Endothelial cell of umbilical vein (primary cell): ENCODE measurements at regions of chr20 and their contacts with region 1.

Region 1: GRCh38 chr20:49729721-49730138 is 16.1 kb upstream of the B4GALT5 start:
- DNase-seq: no peak
- H3K4me3 ChIP-seq: no peak overlapping the region
- H3K27ac ChIP-seq: no peak overlapping the region
- H3K4me1 ChIP-seq: peaks cover 6% of the 10 kb centered on the region
- H3K27me3 ChIP-seq: no peaks in the 10 kb centered on the region
- CTCF ChIP-seq: no peak
- POLR2A ChIP-seq: no peak

Region 2: GRCh38 chr20:49476016-49476355 is 253.7 kb before region 1 on chr20:
- CTCF ChIA-PET with region 1: no interaction called
- POLR2A ChIA-PET with region 1: no interaction called
- dilution Hi-C with region 1: no loop called
- intact Hi-C with region 1: no loop called
- DNase-seq: no peak
- H3K4me3 ChIP-seq: no peak overlapping the region
- H3K27ac ChIP-seq: no peak overlapping the region
- H3K4me1 ChIP-seq: no peaks in the 10 kb centered on the region
- H3K27me3 ChIP-seq: peaks cover 9 to 10% of the 10 kb centered on the region in 2 experiments
- CTCF ChIP-seq: no peak
- POLR2A ChIP-seq: no peak

Region 3: DNA sequence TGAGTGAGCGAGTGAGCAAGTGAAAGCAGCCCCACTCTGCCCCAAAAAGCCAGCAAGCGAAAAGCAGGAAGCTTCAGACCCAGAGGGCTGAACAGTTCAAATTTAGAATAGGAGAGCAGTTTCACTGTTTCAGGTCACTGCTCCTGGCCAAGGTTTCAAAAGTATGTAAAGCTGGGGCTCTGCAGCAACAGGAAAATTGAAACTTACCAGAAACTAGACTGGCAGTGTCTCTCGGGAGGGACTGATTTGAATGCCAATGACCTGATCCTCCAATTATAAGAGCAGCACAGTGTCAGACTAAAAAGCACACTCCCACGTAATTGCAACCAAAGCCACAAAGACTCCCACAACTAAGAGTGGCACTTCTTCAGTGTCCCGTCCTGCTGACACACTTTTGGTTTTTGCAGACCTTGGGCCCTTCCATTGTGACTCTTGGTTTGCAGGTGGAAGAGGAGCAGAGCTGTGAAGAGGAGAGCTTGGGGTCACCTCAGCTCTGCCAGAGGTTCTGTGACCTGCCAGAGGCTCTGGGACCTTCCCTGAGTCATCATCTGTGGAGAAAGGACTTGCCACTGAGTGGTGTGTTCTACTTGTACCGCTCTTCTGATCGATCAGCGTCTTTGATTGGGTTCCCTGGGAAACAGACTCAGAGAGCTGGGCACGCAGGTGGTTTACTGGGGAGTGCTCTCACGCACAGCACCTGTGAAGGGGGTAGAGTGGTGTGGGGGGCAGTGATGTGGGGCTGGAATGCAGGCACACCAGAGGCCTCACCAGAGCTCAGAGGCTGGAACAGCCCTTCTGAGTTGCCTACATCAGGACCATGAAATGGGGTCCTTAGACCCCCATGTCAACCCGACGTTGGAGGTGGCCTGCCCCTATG is 109.1 kb before region 1 on chr20:
- CTCF ChIA-PET with region 1: no interaction called
- POLR2A ChIA-PET with region 1: no interaction called
- dilution Hi-C with region 1: no loop called
- intact Hi-C with region 1: no loop called
- DNase-seq: no peak
- H3K4me3 ChIP-seq: no peak overlapping the region
- H3K27ac ChIP-seq: no peak overlapping the region
- H3K4me1 ChIP-seq: no peaks in the 10 kb centered on the region
- H3K27me3 ChIP-seq: no peaks in the 10 kb centered on the region
- CTCF ChIP-seq: no peak
- POLR2A ChIP-seq: no peak

Region 4: GRCh38 chr20:49685809-49686208 is 43.9 kb before region 1 on chr20:
- CTCF ChIA-PET with region 1: no interaction called
- POLR2A ChIA-PET with region 1: no interaction called
- dilution Hi-C with region 1: no loop called
- intact Hi-C with region 1: no loop called
- DNase-seq: no peak
- H3K4me3 ChIP-seq: no peak overlapping the region
- H3K27ac ChIP-seq: no peak overlapping the region
- H3K4me1 ChIP-seq: peaks cover 14% of the 10 kb centered on the region
- H3K27me3 ChIP-seq: no peaks in the 10 kb centered on the region
- CTCF ChIP-seq: no peak
- POLR2A ChIP-seq: no peak

Region 5: DNA sequence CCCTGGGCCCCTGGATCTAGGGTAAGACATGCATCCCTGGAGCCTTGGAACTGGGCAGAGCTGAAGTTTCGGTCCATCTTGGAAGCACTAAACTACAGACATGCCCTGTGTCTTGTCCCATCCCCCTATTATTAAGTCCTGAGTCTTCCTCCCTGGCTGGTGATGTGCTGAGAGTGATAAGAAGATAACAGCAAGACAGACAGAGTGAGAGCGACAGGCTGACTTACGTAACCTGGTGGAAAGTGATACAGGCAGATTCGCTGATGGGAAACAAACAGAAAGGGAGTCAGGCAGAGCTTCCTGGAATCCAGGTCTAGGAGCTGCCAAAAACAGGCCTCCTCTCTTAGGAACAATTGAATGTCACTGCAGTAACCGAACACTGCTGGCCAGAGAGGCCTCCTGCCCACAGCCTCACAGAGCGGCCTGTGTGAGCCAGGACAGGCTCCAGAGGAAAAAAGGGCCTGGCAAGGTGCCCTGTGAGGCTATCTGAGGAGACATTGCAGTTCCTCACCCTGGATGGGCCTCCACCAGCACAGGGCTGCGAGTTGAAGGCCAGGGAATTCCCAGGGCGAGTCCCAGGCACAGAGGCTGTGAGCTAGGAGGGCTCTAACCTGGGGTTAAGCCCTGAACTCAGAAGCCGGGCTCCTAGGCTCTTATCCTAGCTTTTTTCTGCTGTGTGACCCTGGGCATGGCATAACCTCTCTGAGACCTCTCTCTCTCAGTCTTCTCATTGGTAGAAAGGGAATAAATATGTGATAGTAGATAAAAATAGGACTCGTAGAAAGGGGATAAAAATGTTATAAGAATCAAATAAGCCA is 18.2 kb after region 1 on chr20:
- CTCF ChIA-PET with region 1: interaction called, 3 read pairs
- POLR2A ChIA-PET with region 1: interaction called, 12 read pairs
- dilution Hi-C with region 1: no loop called
- intact Hi-C with region 1: no loop called
- DNase-seq: peak; percentile 69
- H3K4me3 ChIP-seq: no peak overlapping the region
- H3K27ac ChIP-seq: no peak overlapping the region
- H3K4me1 ChIP-seq: no peaks in the 10 kb centered on the region
- H3K27me3 ChIP-seq: no peaks in the 10 kb centered on the region
- CTCF ChIP-seq: no peak
- POLR2A ChIP-seq: no peak